ENCODE measurements at regions of chr10 and their contacts with region 1.

Region 1: GRCh38 chr10:103712570-103713498 is 142.5 kb downstream of the SH3PXD2A start:
- DNase-seq: peak; percentile 74
- H3K4me3 ChIP-seq: no peak overlapping the region
- H3K27ac ChIP-seq: peak overlapping the region; percentile 76
- H3K4me1 ChIP-seq: peaks cover 85% of the 10 kb centered on the region
- H3K27me3 ChIP-seq: no peaks in the 10 kb centered on the region
- CTCF ChIP-seq: peak; percentile 72 to 89

Region 2: GRCh38 chr10:103626178-103626577 is 86.7 kb before region 1 on chr10:
- CTCF ChIA-PET with region 1: no interaction called
- dilution Hi-C with region 1: no loop called
- in situ Hi-C with region 1: no loop called
- intact Hi-C with region 1: no loop called
- DNase-seq: no peak
- H3K4me3 ChIP-seq: no peak overlapping the region
- H3K27ac ChIP-seq: no peak overlapping the region
- H3K4me1 ChIP-seq: no peaks in the 10 kb centered on the region
- H3K27me3 ChIP-seq: no peaks in the 10 kb centered on the region
- CTCF ChIP-seq: no peak

Region 3: DNA sequence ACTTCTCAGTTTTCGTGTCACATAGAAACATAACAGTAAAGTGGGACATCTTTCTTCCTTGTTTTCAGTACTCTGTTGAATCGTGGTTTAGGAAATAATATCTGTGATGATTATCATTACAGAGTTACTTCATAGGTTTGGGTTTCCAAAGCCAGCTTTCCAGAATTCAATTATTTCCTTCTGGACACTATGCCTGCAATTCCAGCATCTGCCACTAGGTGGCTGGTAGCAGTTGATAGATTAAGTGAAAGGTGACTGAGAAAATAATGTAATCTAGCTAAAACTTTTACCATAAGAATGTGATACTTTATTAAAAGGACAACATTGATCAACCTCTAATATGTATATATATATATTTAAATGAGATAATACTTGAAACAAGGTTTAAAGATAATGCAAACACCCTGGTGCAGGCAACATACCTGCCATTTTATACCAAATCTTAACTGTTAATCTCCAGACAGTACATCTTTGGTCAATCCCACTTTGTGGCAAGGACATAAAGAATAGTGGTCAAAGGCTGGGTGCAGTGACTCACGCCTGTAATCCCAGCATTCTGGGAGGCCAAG is 39.9 kb after region 1 on chr10:
- CTCF ChIA-PET with region 1: interaction called, 11 read pairs
- dilution Hi-C with region 1: no loop called
- in situ Hi-C with region 1: no loop called
- intact Hi-C with region 1: no loop called
- DNase-seq: no peak
- H3K4me3 ChIP-seq: no peak overlapping the region
- H3K27ac ChIP-seq: no peak overlapping the region
- H3K4me1 ChIP-seq: peaks cover 41% of the 10 kb centered on the region
- H3K27me3 ChIP-seq: no peaks in the 10 kb centered on the region
- CTCF ChIP-seq: peak; percentile 78 to 91

Region 4: DNA sequence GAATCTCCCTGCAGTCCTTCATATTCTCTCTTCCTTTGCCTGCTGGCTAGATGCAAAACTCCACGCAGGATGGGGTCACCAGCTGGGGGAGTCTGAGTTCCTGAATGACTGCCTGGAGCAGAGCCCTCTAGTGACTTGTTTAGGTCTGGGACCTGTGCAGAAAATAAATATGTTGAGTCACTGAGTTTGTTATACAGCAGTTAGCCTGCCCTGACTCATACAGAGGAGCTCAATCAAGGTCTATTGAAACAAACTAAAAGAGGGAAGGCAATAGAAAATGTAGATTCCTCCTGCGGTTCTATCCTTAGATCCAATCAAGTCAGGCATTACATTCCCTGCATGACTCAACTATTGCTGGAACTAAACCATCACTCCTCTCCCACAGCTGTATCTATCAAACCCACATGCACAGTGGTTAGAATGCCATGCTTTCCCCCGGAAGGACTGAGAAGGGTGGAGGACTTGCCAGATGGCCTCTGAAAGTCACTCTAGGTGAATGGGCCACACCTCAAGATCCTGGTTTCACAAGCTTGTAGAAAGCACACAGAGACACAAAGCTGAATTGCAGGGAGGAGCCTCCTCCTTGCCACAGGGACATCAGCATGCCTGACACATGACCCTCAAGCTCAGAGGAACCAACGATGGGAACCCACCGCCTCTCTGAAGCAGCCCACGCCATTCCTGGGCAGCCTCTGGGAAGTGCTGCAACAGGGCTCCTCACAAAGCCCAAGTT is 68.7 kb after region 1 on chr10:
- CTCF ChIA-PET with region 1: interaction called, 12 read pairs
- dilution Hi-C with region 1: no loop called
- in situ Hi-C with region 1: no loop called
- intact Hi-C with region 1: loop called (anchors 1 kb)
- DNase-seq: peak; percentile 99
- H3K4me3 ChIP-seq: no peak overlapping the region
- H3K27ac ChIP-seq: peak overlapping the region; percentile 90
- H3K4me1 ChIP-seq: peaks cover 77% of the 10 kb centered on the region
- H3K27me3 ChIP-seq: no peaks in the 10 kb centered on the region
- CTCF ChIP-seq: peak; percentile 66 to 68

Region 5: GRCh38 chr10:103789771-103790201 is 77.0 kb after region 1 on chr10:
- CTCF ChIA-PET with region 1: no interaction called
- dilution Hi-C with region 1: loop called (anchors 5 kb)
- in situ Hi-C with region 1: no loop called
- intact Hi-C with region 1: no loop called
- DNase-seq: peak; percentile 65
- H3K4me3 ChIP-seq: no peak overlapping the region
- H3K27ac ChIP-seq: peak overlapping the region; percentile 68
- H3K4me1 ChIP-seq: peaks cover 68% of the 10 kb centered on the region
- H3K27me3 ChIP-seq: no peaks in the 10 kb centered on the region
- CTCF ChIP-seq: no peak

Region 6: GRCh38 chr10:103828107-103828506 is 115.3 kb after region 1 on chr10:
- CTCF ChIA-PET with region 1: no interaction called
- dilution Hi-C with region 1: no loop called
- in situ Hi-C with region 1: no loop called
- intact Hi-C with region 1: loop called (anchors 1 kb)
- DNase-seq: peak; percentile 96
- H3K4me3 ChIP-seq: no peak overlapping the region
- H3K27ac ChIP-seq: peak overlapping the region; percentile 65
- H3K4me1 ChIP-seq: peaks cover 80% of the 10 kb centered on the region
- H3K27me3 ChIP-seq: no peaks in the 10 kb centered on the region
- CTCF ChIP-seq: no peak

Region 7: DNA sequence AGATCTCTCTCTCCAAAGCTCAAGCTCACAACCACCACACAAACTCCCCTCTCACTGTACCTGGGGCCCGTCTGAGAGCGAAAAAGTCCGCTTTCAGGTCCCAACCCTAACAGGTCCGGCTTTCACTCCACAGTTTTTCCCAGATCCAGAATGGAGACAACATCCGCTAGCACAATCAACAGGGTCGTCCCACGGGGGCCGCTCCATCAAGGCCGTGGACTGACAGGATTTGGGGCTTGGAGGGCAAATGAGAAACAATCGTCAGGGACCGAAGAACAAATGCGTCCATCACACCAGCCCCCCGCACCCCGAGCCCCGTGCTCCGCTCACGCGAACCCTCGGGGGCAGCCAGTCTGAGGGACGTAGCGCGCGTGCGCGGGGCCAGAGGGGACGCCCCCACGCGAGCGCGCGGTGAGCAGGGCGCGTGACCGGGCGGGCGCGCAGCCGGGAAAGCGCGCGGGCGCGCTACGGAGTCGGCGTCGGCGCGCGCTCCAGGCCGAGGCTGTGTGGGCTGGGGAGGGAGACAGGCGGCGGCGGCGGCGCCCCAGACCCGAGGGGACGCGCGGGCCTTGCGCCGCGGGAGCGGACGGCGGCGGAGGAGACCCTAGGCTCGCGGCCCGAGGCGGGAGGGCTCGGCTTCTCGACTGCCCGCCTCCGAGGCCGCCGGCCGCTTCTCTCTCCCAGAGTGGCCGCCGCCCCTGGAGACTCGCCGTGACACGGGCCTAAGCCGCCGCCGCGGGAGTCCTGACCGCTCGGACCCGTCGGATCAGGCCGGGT is 254.0 kb after region 1 on chr10 and contains the start of gene SLK:
- CTCF ChIA-PET with region 1: no interaction called
- dilution Hi-C with region 1: no loop called
- in situ Hi-C with region 1: no loop called
- intact Hi-C with region 1: loop called (anchors 10 kb)
- DNase-seq: peak; percentile 80
- H3K4me3 ChIP-seq: peak within 1 kb of the TSS; percentile 69 to 99 (median 97)
- H3K27ac ChIP-seq: peak within 1 kb of the TSS; percentile 72
- H3K4me1 ChIP-seq: peaks cover 13% of the 10 kb centered on the region
- H3K27me3 ChIP-seq: no peaks in the 10 kb centered on the region
- CTCF ChIP-seq: no peak
- total RNA-seq, gene SLK: 79.5 to 85.0 TPM

Region 8: DNA sequence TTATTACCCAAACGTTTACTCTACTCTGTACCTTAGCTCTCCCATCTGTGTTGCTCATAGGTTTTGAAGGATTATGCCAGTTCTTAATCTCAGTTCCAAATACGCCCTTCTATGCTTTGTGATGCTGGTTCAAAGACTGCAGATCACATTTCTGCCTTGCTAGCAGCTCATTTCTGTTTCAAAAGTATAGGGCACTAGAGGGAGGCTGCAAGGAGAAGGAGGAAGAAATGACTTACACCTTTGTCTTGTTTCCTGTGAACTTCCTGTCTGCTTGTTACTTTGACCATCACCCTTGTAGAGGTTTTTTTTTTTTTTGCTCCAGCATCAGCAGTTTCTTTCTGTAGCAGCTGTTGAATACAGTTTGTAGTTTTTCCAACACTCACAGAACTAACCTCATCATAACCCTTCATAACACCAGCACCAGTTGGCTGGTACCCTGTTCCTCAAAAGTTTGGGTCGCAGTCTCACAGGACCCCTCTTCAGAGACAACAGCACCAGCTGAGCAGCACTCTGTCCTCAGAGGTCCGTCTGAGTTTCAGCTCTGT is 270.6 kb after region 1 on chr10:
- CTCF ChIA-PET with region 1: no interaction called
- dilution Hi-C with region 1: no loop called
- in situ Hi-C with region 1: loop called in 1 of 2 experiments (anchors 10 kb)
- intact Hi-C with region 1: loop called (anchors 10 kb)
- DNase-seq: no peak
- H3K4me3 ChIP-seq: no peak overlapping the region
- H3K27ac ChIP-seq: no peak overlapping the region
- H3K4me1 ChIP-seq: peaks cover 16% of the 10 kb centered on the region
- H3K27me3 ChIP-seq: no peaks in the 10 kb centered on the region
- CTCF ChIP-seq: no peak

Measured in mammary epithelial cell (primary cell).